OCI-LY7 (cell line): ENCODE measurements at regions of chr16 and their contacts with region 1.

Region 1: DNA sequence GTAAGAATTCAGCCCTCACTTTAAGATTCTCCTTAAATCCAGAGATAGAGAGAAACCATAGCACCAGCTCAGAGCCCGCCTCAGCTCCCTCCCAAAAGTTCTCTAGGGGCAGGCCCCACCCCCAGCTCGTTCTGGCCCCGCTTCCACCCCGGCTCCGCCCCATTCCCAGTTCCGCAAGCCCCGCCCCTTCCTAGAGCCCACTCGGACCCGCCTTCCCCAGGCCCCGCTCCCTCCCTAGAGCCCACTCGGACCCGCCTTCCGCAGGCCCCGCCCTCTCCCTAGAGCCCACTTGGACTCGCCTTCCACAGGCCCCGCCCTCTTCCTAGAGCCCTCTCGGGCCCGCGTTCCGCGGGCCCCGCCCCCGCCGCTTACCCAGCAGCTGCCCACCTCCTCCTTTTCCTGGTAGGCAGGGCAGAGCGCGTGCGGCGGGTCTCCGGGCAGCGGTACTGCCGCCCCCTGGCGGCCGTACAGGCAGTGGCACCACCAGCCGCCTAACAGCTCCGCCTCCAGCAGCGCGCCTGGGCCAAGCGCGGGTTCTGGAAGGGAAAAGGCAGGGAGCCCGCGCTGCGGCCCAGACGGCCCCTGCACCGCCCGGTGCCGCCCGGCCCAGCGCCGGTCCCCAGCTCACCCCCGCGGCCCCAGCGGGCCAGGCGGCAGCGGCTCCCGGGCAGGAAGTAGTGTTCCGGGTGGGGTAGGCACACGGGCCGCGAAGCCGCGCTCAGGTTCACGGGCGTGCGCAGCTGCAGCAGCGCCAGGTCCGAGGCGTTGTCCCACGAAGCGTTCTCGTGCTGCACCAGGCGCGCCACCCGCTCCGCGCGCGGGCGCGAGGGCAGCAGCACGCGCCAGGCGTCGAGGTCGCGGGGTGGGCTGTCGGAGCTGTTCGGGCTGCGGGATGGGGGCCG is 6.8 kb upstream of the PRSS8 start:
- DNase-seq: peak; percentile 99
- H3K4me3 ChIP-seq: peak overlapping the region; percentile 62
- H3K27ac ChIP-seq: peak overlapping the region; percentile 23
- H3K4me1 ChIP-seq: peaks cover 16% of the 10 kb centered on the region
- CTCF ChIP-seq: peak; percentile 89

Region 2: DNA sequence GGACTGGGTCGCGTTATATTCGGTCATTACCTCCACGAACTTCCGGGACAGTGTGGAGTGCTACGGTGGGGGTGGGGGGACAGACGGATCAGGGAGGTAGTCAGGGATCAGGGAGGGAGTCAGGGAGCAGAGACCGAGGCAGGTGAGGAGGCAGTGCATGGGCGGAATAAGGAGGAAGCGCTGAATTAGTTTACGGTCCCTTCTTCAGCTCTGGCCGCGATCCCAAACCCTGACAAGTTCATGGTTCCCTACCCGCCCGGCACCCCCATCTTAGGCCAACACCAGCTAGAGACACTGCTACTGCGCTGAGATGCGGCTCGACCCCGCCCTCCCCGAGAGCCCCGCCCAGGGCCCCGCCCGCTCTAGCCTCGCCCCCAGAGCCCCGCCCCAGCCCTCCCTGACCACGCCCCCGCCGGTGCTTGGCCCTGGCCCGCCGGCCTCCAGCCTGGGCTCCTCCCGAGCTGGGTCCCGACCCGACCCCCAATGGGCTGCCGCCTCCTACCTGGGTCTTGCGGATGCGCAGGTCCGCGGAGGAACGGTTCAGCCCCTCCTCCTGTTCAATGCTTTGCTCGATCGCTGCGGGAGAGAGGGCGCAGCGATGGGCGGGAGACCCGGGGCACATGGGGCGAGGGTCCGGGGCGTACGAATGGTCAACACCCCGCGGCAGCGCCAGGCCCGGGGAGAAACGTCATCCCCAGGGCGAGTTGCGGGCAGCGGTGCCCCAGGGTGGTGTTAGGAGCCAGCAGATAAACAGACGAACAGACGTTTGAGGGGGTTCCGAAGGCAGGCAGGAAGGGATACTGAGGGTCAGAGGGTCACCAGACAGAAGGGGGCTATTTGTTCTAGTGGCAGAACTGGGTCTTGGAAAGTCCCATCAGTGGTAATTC is 145.1 kb before region 1 on chr16:
- CTCF ChIA-PET with region 1: no interaction called
- POLR2A ChIA-PET with region 1: no interaction called
- intact Hi-C with region 1: loop called (anchors 1 kb)
- DNase-seq: peak; percentile 79
- H3K4me3 ChIP-seq: peak overlapping the region; percentile 72
- H3K27ac ChIP-seq: no peak overlapping the region
- H3K4me1 ChIP-seq: peaks cover 10% of the 10 kb centered on the region
- CTCF ChIP-seq: no peak

Region 3: DNA sequence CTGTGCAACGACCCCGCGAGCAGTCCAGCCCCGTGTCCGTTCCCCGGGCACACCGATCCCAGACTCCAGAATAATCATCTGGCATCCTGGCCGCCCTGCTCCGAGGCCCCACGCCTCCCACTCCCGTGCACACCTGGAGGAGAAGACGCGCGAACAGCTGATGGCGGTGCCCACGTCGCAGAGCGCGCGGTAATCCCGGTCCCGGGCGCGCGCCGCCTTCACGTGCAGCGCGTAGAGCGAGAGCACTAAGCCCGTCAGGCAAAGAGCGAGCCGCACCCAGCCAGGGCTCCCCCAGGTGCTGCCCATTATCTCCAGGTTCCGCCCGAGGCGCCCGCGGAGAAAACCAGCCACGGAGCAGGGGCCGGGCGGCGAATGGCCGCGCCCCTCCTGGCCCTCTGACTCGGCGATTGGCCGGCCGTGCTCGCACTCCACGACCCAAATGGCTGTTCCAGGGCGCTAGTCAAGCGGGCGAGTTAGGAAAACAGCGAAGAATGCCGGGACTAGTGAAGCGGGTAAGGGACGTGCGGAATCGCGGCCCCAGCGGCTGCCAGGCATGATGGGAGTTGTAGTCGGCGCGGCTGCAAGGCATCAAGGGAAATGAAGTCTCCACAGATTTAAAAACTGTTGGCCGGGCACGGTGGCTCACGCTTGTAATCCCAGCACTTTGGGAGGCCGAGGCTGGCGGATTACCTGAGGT is 47.8 kb before region 1 on chr16 and contains the start of gene VKORC1:
- CTCF ChIA-PET with region 1: no interaction called
- POLR2A ChIA-PET with region 1: no interaction called
- intact Hi-C with region 1: loop called (anchors 1 kb)
- DNase-seq: peak; percentile 92
- H3K4me3 ChIP-seq: peak within 1 kb of the TSS; percentile 86
- H3K27ac ChIP-seq: peak within 1 kb of the TSS; percentile 71
- H3K4me1 ChIP-seq: peaks cover 18% of the 10 kb centered on the region
- CTCF ChIP-seq: no peak
- total RNA-seq, gene VKORC1: 68.8 and 69.3 TPM in 2 replicates

Region 4: DNA sequence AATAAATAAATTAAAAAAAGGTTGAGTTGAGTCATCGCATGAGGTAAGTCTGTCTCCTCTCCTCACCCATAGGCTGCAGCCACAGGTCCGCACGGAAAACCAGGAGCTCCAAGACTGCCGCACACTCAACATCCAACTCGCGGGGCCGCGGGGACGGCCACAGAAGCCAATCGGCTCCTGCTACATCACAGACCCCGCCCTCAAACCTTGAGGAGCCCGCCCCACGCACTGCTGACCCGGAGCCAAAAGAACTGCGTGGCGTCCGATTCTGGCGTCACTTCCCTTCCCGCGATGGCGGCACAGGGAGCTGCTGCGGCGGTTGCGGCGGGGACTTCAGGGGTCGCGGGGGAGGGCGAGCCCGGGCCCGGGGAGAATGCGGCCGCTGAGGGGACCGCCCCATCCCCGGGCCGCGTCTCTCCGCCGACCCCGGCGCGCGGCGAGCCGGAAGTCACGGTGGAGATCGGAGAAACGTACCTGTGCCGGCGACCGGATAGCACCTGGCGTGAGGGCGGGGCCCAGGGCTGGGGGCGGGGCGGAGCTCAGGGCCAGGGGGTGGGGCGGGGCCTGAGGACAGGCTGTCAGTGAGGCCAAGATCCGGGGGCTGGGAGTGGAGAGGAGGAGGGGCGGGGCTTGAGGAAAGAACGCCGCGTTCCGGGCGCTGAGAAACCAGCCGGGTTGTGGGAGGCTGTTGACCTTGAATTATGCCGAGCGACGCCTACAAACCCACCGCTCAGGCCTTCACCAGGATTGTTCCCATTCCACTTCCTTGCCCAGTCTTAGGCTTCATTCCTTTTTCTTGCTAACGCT is 24.8 kb before region 1 on chr16 and contains the start of gene KAT8:
- CTCF ChIA-PET with region 1: interaction called, 6 read pairs
- POLR2A ChIA-PET with region 1: interaction called, 16 read pairs
- intact Hi-C with region 1: loop called (anchors 1 kb)
- DNase-seq: peak; percentile 99
- H3K4me3 ChIP-seq: peak within 1 kb of the TSS; percentile 81
- H3K27ac ChIP-seq: peak within 1 kb of the TSS; percentile 65
- H3K4me1 ChIP-seq: peaks cover 8% of the 10 kb centered on the region
- CTCF ChIP-seq: no peak
- total RNA-seq, gene KAT8: 86.9 and 89.1 TPM in 2 replicates

Region 5: GRCh38 chr16:31440516-31441184 is 298.3 kb after region 1 on chr16:
- CTCF ChIA-PET with region 1: no interaction called
- POLR2A ChIA-PET with region 1: no interaction called
- intact Hi-C with region 1: loop called (anchors 1 kb)
- DNase-seq: no peak
- H3K4me3 ChIP-seq: no peak overlapping the region
- H3K27ac ChIP-seq: no peak overlapping the region
- H3K4me1 ChIP-seq: peaks cover 23% of the 10 kb centered on the region
- CTCF ChIP-seq: no peak